PC-9 (cell line): ENCODE measurements at regions of chrX and their contacts with region 1.

Region 1: GRCh38 chrX:33434256-33435092 is 223.1 kb upstream of the DMD start:
- DNase-seq: peak in 1 of 2 experiments; percentile 43
- H3K4me3 ChIP-seq: no peak overlapping the region
- H3K27ac ChIP-seq: no peak overlapping the region
- H3K4me1 ChIP-seq: no peaks in the 10 kb centered on the region
- H3K27me3 ChIP-seq: no peaks in the 10 kb centered on the region
- CTCF ChIP-seq: peak; percentile 89

Region 2: DNA sequence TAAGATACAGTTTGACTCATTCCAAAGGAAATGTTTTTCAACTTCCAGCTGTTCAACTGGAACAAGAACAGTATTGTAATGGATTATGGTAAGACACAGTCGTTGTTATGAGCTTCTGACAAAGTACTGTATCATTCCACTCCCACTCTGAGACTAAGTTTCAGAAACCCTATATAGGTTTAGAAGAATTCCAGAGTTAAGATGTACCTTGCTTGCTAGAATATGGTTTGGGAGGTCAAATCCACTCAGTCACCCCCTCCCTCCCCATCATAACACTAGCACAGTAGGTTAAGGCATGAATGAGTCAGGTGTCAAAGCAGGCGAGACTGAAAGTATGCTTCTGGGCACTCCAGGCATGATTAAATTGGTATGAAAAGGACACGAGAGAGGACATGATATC is 562.8 kb before region 1 on chrX:
- CTCF ChIA-PET with region 1: no interaction called
- POLR2A ChIA-PET with region 1: no interaction called
- intact Hi-C with region 1: no loop called
- DNase-seq: no peak
- H3K4me3 ChIP-seq: no peak overlapping the region
- H3K27ac ChIP-seq: no peak overlapping the region
- H3K4me1 ChIP-seq: no peaks in the 10 kb centered on the region
- H3K27me3 ChIP-seq: no peaks in the 10 kb centered on the region
- CTCF ChIP-seq: no peak

Region 3: GRCh38 chrX:34275699-34276098 is 841.2 kb after region 1 on chrX:
- CTCF ChIA-PET with region 1: interaction called, 8 read pairs
- POLR2A ChIA-PET with region 1: no interaction called
- intact Hi-C with region 1: loop called (anchors 1 kb)
- DNase-seq: no peak
- H3K4me3 ChIP-seq: no peak overlapping the region
- H3K27ac ChIP-seq: no peak overlapping the region
- H3K4me1 ChIP-seq: no peaks in the 10 kb centered on the region
- H3K27me3 ChIP-seq: no peaks in the 10 kb centered on the region
- CTCF ChIP-seq: peak; percentile 56

Region 4: DNA sequence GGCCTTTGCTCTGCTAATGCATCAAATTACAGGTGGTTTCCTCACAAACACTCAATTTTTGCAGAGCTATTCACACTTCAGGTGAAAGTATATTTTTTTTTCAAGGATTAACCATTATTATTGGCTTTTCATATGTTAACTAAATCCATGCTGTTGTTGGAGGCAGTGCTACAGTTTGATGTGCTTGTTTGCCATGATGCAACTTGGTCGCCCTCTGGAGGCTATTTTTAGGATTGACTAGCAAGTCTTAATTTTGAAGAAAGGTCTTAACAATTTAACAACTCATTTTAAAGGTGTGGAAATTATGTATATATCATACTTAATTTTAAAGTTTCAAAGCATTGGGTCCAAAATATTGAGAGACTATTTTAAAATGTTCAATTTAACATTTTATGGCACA is 866.4 kb after region 1 on chrX:
- CTCF ChIA-PET with region 1: no interaction called
- POLR2A ChIA-PET with region 1: no interaction called
- intact Hi-C with region 1: loop called (anchors 1 kb)
- DNase-seq: peak in 1 of 2 experiments; percentile 15
- H3K4me3 ChIP-seq: no peak overlapping the region
- H3K27ac ChIP-seq: no peak overlapping the region
- H3K4me1 ChIP-seq: no peaks in the 10 kb centered on the region
- H3K27me3 ChIP-seq: no peaks in the 10 kb centered on the region
- CTCF ChIP-seq: peak; percentile 81